MCF 10A (cell line): ENCODE measurements at regions of chr9 and their contacts with region 1.

Region 1: DNA sequence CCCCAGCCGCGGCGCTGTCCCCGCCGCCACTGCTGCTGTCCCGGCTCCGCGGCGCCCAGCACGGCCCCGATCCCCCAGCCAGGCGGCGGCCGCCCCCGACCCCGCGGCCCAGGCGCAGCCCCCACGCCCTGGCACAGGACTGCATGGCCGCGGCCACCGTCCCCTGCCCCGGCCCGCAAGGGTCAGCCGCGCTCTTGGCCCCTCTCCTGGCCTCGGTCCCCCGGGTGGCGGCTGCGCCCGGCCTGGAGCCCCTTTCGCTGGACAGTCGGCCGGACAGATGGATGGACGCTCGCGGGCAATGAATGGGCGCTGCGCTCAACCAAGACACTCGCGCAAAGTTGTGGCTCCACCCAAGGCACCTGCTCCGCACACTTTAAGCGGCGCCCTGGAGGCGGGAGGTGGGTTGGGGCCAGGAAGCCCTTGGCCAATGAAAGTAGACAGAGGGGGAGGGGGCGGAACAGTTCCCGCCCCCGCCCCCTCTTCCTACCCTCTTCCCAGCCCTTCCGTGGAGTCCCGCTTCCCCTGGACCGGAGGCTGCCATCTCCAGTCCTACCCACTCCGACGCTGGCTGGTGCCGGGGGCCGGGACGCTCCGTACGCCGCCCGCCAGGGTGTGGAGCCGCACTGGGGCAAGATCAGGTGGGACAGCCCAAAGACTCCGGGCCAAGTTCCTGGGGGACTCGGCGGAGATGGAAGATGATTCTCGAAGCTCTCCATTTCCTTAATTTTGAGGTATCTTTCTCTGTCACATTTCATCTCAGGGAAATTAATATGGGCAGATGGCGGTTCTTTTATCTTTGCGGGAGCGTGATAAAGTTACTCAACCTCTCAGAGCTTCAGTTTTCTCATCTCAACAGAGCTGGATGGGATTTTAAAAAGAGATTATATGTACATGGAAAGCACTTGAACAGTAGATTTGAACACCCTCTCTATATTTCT is at the start of gene GLDC:
- DNase-seq: peak; percentile 83
- H3K4me3 Mint-ChIP-seq: peak within 1 kb of the TSS; percentile 65
- H3K27ac Mint-ChIP-seq: no peak within 1 kb of the TSS
- H3K4me1 Mint-ChIP-seq: peaks cover under 1% of the 10 kb centered on the region
- H3K27me3 Mint-ChIP-seq: no peaks in the 10 kb centered on the region
- CTCF ChIP-seq: no peak
- total RNA-seq, gene GLDC: 2.9 and 3.3 TPM in 2 replicates

Region 2: GRCh38 chr9:6632516-6633183 is 13.0 kb before region 1 on chr9:
- CTCF ChIA-PET with region 1: interaction called, 5 read pairs
- POLR2A ChIA-PET with region 1: interaction called, 27 read pairs
- intact Hi-C with region 1: no loop called
- DNase-seq: peak; percentile 8
- H3K4me3 Mint-ChIP-seq: no peak overlapping the region
- H3K27ac Mint-ChIP-seq: no peak overlapping the region
- H3K4me1 Mint-ChIP-seq: peaks cover 26% of the 10 kb centered on the region
- H3K27me3 Mint-ChIP-seq: no peaks in the 10 kb centered on the region
- CTCF ChIP-seq: no peak

Region 3: DNA sequence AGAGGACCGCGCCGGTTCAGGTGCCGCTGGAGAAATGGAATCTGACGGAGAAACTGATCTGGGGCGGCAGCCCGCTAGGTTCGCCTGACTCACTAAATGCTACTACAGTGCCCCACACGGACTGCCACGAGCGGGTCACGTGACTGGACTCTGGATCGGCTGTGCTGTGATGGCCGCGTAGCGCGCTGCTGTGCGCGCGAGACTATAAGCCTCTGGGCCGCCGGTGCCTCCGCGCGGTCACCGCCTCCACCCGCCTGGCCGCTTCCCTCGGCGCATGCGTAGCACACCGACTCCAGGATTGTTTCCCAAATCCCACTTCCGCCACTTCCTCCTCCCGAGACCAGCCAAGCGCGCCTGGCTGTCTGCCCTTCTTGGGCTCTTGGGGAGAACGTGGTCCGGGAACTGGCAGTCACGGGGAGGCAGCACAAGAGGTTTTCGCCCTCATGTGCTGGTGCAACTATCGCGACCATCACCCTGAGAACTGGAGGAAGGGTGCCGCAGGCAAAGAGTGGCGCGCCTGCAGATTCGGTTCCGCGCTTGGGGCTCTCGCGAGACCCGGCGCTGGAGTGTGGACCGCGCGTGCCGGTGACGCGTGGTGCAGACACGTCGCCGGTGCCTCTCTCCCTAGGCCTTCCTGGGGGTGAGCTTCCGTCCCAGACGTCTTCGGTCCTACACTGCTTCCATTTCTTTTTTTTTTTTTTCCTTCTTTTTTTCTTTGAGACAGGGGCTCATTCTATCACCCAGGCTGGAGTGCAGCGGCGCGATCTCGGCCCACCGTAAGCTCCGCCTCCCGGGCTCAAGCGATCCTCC is 35.7 kb after region 1 on chr9:
- CTCF ChIA-PET with region 1: no interaction called
- POLR2A ChIA-PET with region 1: interaction called, 14 read pairs
- intact Hi-C with region 1: no loop called
- DNase-seq: peak; percentile 97
- H3K4me3 Mint-ChIP-seq: peak overlapping the region; percentile 92
- H3K27ac Mint-ChIP-seq: peak overlapping the region; percentile 98
- H3K4me1 Mint-ChIP-seq: peaks cover 15% of the 10 kb centered on the region
- H3K27me3 Mint-ChIP-seq: no peaks in the 10 kb centered on the region
- CTCF ChIP-seq: no peak